ENCODE measurements at regions of chr6 and their contacts with region 1.

Region 1: GRCh38 chr6:96897383-96898240 is at the start of gene NDUFAF4:
- DNase-seq: peak; percentile 95
- ATAC-seq: peak; percentile 93
- H3K4me3 Mint-ChIP-seq: peak within 1 kb of the TSS; percentile 97
- H3K27ac Mint-ChIP-seq: peak within 1 kb of the TSS; percentile 94
- H3K4me1 Mint-ChIP-seq: peaks cover 27% of the 10 kb centered on the region
- H3K27me3 Mint-ChIP-seq: peaks cover 4% of the 10 kb centered on the region
- CTCF ChIP-seq: no peak
- total RNA-seq, gene NDUFAF4: 39.9 and 40.7 TPM in 2 replicates

Region 2: DNA sequence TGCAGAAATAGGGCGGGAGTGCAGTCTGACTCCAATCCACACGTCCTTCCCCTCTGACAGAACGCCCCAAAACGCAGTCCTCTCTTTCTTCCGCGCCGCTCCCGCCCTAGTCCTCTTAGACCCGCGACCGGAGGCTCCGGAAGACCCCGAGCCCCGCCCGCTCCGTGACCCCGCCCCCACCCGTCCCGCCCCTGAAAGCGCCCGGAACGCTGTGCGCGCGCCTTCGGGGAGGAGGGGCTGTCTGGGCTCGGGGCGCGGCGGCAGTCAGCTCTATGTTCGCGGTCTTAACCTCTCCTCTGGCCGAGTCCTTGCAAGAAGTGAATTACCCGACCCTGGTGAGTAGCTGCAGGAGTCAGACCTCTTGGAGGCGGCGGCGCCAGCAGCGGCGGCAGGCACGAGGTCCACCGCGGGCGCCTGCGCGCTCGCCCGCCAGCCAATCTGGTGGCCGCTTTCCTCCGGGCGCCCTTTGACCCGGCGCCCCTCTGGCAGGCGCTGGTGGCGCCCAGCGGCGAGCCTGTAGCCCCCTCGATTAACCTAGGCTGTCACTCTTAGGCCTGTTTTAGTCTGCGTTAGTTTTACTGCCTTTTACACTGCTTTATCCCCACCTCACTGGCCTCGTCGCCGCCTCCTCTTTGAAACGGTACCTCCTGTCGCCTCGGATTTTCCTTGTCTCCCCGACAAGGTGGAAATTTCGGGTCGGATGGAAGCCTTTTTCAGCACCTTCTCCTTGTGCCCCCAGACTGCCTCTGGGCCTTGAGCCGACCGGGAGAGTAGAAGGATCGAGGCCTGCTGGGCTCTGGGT is 1320.1 kb before region 1 on chr6 and contains the start of gene MANEA:
- CTCF ChIA-PET with region 1: no interaction called
- POLR2A ChIA-PET with region 1: no interaction called
- intact Hi-C with region 1: loop called (anchors 1 kb)
- DNase-seq: peak; percentile 73
- ATAC-seq: peak; percentile 86
- H3K4me3 Mint-ChIP-seq: peak within 1 kb of the TSS; percentile 98
- H3K27ac Mint-ChIP-seq: peak within 1 kb of the TSS; percentile 98
- H3K4me1 Mint-ChIP-seq: peaks cover 33% of the 10 kb centered on the region
- H3K27me3 Mint-ChIP-seq: no peaks in the 10 kb centered on the region
- CTCF ChIP-seq: no peak
- total RNA-seq, gene MANEA: 5.0 and 7.5 TPM in 2 replicates

Region 3: GRCh38 chr6:96611342-96611991 is 286.1 kb before region 1 on chr6:
- CTCF ChIA-PET with region 1: no interaction called
- POLR2A ChIA-PET with region 1: no interaction called
- intact Hi-C with region 1: loop called (anchors 5 kb)
- DNase-seq: no peak
- ATAC-seq: peak; percentile 47
- H3K4me3 Mint-ChIP-seq: no peak overlapping the region
- H3K27ac Mint-ChIP-seq: no peak overlapping the region
- H3K4me1 Mint-ChIP-seq: peaks cover 28% of the 10 kb centered on the region
- H3K27me3 Mint-ChIP-seq: peaks cover 6% of the 10 kb centered on the region
- CTCF ChIP-seq: no peak

Region 4: DNA sequence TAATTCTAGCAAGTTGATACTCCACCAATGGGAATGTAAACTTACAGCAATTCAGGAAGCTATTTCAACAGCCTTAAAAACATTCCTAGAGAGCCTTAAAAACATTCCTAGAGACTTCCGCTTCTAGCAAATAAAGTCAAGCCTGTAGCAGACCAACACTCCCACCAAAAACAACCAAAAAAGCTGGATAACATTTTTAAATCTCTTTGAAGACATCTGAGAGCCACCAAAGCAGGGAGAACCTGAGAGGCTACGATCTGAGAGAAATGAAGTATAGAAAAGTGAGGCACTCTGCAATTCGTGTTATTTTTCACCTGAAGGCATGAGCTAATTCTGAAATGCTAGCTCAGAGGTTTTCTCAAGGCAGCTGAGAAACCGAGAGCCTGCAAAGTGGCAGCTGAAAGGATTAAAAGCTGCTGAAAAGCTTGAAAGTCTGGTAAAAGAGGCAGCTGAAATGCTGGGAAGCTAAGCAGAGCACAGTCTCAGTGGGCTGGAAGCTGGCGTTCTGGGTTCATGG is 81.3 kb before region 1 on chr6:
- CTCF ChIA-PET with region 1: no interaction called
- POLR2A ChIA-PET with region 1: no interaction called
- intact Hi-C with region 1: no loop called
- DNase-seq: no peak
- ATAC-seq: no peak
- H3K4me3 Mint-ChIP-seq: no peak overlapping the region
- H3K27ac Mint-ChIP-seq: no peak overlapping the region
- H3K4me1 Mint-ChIP-seq: no peaks in the 10 kb centered on the region
- H3K27me3 Mint-ChIP-seq: peaks cover 11% of the 10 kb centered on the region
- CTCF ChIP-seq: no peak

Region 5: GRCh38 chr6:96878143-96878542 is 19.5 kb before region 1 on chr6:
- CTCF ChIA-PET with region 1: no interaction called
- POLR2A ChIA-PET with region 1: no interaction called
- intact Hi-C with region 1: no loop called
- DNase-seq: no peak
- ATAC-seq: no peak
- H3K4me3 Mint-ChIP-seq: no peak overlapping the region
- H3K27ac Mint-ChIP-seq: no peak overlapping the region
- H3K4me1 Mint-ChIP-seq: no peaks in the 10 kb centered on the region
- H3K27me3 Mint-ChIP-seq: peaks cover 5% of the 10 kb centered on the region
- CTCF ChIP-seq: no peak

Region 6: DNA sequence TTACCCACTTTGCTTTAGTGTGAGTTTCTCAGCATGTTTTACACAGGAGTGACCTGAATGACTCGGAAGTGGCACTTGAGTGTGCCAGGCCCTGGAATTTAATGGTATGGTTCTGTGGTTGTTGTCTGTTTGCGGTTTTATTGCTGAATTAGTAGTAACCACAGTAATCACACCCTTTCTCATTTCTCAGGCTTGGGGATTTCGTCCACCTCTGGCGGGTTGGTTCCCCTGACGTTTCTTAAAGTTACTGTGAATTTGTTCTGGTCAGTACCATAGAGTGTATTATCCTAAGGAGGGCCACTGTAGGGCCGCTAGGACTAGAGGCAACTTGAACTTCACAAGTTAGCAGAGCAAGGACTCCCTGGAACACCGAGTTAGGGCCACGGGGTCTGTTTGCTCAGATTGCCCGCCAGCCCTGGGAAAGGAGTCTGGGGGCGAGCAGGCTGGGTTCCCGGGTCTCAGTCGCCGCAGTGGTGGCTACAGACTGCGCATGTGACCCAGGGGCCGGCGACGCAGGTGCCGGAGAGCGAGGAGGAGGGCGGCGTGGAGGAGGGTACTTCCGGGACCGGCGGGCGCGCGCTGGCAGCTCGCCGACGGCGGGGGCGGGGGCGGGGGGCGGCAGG is 26.4 kb after region 1 on chr6:
- CTCF ChIA-PET with region 1: interaction called, 3 read pairs
- POLR2A ChIA-PET with region 1: interaction called, 28 read pairs
- intact Hi-C with region 1: loop called (anchors 1 kb)
- DNase-seq: no peak
- ATAC-seq: peak; percentile 10
- H3K4me3 Mint-ChIP-seq: peak overlapping the region; percentile 94
- H3K27ac Mint-ChIP-seq: peak overlapping the region; percentile 92
- H3K4me1 Mint-ChIP-seq: peaks cover 24% of the 10 kb centered on the region
- H3K27me3 Mint-ChIP-seq: peaks cover 3% of the 10 kb centered on the region
- CTCF ChIP-seq: no peak

Region 7: GRCh38 chr6:96980142-96980541 is 82.5 kb after region 1 on chr6:
- CTCF ChIA-PET with region 1: no interaction called
- POLR2A ChIA-PET with region 1: no interaction called
- intact Hi-C with region 1: no loop called
- DNase-seq: no peak
- ATAC-seq: no peak
- H3K4me3 Mint-ChIP-seq: no peak overlapping the region
- H3K27ac Mint-ChIP-seq: no peak overlapping the region
- H3K4me1 Mint-ChIP-seq: no peaks in the 10 kb centered on the region
- H3K27me3 Mint-ChIP-seq: peaks cover 2% of the 10 kb centered on the region
- CTCF ChIP-seq: no peak

Region 8: DNA sequence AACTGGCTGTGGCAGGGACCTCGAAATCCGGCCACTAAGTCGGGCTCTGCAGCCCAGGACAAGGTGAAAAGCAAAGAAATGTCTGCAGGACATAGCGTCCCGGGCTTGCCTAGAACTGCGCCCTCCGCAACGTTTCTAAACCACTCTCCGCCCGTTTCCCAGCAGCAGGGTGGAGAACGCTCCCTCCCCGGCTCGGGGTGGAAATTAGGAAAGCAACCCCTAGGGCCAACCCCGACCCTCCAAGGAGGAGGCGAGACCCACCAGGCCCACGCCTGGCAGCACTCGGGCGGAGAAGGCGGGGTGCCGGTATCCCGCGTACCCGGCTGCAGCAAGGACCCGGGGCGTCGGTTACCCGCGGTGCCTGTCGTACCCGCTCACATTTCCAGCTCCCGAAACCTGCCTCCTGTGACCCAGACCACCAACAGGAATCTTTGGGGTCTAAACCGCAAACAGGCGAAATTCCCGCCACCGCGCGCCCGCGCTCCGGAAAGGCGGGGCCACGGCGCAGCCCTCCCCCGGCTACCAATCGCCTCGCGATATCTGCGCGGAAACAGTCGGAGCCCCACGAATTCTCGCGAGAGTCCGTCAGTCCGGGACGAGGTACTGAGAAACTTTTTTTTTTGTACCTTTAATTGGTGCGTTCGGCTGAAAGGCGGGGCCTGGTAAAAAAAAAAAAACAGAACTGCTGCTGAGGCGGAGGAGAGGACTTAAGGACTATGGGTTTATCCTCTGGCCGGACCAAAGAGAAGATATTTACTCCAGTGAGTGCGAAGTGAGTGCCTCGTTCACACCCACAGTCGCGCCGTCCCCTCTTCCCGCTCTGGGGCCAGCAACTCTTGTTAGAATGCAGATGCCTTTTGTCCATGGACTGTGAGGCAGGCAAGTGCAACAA is 385.4 kb after region 1 on chr6 and contains the start of gene MMS22L:
- CTCF ChIA-PET with region 1: no interaction called
- POLR2A ChIA-PET with region 1: no interaction called
- intact Hi-C with region 1: loop called (anchors 1 kb)
- DNase-seq: peak; percentile 83
- ATAC-seq: peak; percentile 98
- H3K4me3 Mint-ChIP-seq: peak within 1 kb of the TSS; percentile 91
- H3K27ac Mint-ChIP-seq: peak within 1 kb of the TSS; percentile 87
- H3K4me1 Mint-ChIP-seq: peaks cover 21% of the 10 kb centered on the region
- H3K27me3 Mint-ChIP-seq: no peaks in the 10 kb centered on the region
- CTCF ChIP-seq: no peak
- total RNA-seq, gene MMS22L: 15.5 and 17.9 TPM in 2 replicates